CD8-positive, alpha-beta memory T cell (primary cell): ENCODE measurements at regions of chr3 and their contacts with region 1.

Region 1: DNA sequence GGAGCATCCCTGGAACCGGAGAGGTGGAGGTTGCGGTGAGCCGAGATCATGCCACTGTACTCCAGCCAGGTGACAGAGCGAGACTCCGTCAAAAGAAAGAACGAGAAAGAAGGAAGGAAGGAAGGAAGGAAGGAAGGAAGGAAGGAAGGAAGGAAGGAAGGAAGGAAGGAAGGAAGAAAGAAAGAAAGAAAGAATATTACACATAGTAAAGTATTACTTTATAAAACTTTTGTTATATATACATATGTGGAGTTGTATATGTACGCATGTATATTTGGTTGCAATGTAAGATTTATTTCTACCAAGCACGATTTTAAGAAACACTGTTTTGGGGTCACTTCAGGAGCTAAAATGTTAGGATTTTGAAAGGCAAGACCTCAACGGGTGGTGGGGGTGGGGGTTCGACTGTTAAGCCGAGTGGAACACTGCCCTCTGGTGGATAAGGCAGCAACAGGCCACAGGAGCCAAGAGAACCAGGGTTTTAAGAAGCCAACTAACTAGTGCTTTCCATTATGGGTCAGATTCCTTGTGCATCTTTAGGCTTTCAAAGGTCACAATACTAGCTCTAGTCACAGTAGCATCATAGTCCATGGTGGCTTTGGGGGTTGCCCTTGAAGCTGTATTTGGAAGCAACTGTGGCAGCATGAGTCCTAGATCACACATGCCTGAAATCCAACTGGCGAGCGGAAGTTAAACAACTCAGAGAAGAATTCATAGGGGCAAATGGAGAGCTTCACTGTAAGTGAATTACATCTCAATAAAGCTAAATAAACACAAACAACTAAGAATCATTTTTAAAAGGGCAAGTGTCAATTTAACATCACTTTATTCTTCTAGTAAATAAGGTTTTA is 22.5 kb downstream of the GLB1 start:
- DNase-seq: peak in 4 of 5 donors; percentile 51 to 80 (median 54)
- H3K4me3 ChIP-seq: no peak overlapping the region
- H3K4me3 Mint-ChIP-seq: no peak overlapping the region
- H3K27ac ChIP-seq: no peak overlapping the region
- H3K27ac Mint-ChIP-seq: peak overlapping the region in 3 of 8 donors; percentile 1 to 71 (median 52)
- H3K4me1 ChIP-seq: no peaks in the 10 kb centered on the region
- H3K4me1 Mint-ChIP-seq: peaks cover 18 to 65% (median 54%) of the 10 kb centered on the region in 3 donors
- H3K27me3 ChIP-seq: no peaks in the 10 kb centered on the region
- H3K27me3 Mint-ChIP-seq: no peaks in the 10 kb centered on the region

Region 2: GRCh38 chr3:32947789-32948238 is 126.6 kb before region 1 on chr3:
- CTCF ChIA-PET with region 1: interaction called, 125 read pairs
- POLR2A ChIA-PET with region 1: no interaction called
- DNase-seq: peak; percentile 69 to 90 (median 83)
- H3K4me3 ChIP-seq: no peak overlapping the region
- H3K4me3 Mint-ChIP-seq: peak overlapping the region in 1 of 7 donors; percentile 57
- H3K27ac ChIP-seq: no peak overlapping the region
- H3K27ac Mint-ChIP-seq: peak overlapping the region in 3 of 8 donors; percentile 23 to 38 (median 32)
- H3K4me1 ChIP-seq: peaks cover 21% of the 10 kb centered on the region
- H3K4me1 Mint-ChIP-seq: peaks cover 21 to 47% (median 46%) of the 10 kb centered on the region in 3 donors
- H3K27me3 ChIP-seq: no peaks in the 10 kb centered on the region
- H3K27me3 Mint-ChIP-seq: no peaks in the 10 kb centered on the region

Region 3: DNA sequence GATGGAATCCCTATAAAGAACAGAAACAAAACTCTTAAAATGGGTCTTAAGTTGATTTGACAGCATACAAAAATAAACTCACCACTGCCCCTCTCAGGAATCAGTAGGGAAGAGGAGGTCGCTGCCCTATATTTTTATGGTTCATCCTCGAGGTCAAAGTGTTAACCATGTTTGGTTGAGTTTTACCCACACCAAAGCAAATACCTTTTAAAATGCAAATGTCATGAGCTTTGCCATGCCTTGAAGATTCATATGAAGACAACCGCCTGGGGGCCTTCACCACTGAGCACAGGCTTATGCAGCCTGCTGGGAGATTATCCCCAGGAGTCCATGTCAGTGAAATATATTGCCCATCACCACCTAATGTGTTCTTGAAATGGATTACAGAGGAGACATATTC is 43.6 kb before region 1 on chr3:
- CTCF ChIA-PET with region 1: interaction called, 25 read pairs
- POLR2A ChIA-PET with region 1: no interaction called
- DNase-seq: peak in 2 of 5 donors; percentile 59 to 71
- H3K4me3 ChIP-seq: no peak overlapping the region
- H3K4me3 Mint-ChIP-seq: peak overlapping the region in 6 of 7 donors; percentile 1 to 59 (median 32)
- H3K27ac ChIP-seq: no peak overlapping the region
- H3K27ac Mint-ChIP-seq: peak overlapping the region in 7 of 8 donors; percentile 23 to 81 (median 48)
- H3K4me1 ChIP-seq: no peaks in the 10 kb centered on the region
- H3K4me1 Mint-ChIP-seq: peaks cover 25 to 40% (median 38%) of the 10 kb centered on the region in 3 donors
- H3K27me3 ChIP-seq: no peaks in the 10 kb centered on the region
- H3K27me3 Mint-ChIP-seq: no peaks in the 10 kb centered on the region

Region 4: GRCh38 chr3:33047842-33048834 is 26.3 kb before region 1 on chr3:
- CTCF ChIA-PET with region 1: interaction called, 33 read pairs
- POLR2A ChIA-PET with region 1: interaction called, 6 read pairs
- DNase-seq: peak; percentile 31 to 84 (median 80)
- H3K4me3 ChIP-seq: peak overlapping the region; percentile 19
- H3K4me3 Mint-ChIP-seq: peak overlapping the region; percentile 62 to 87 (median 82)
- H3K27ac ChIP-seq: no peak overlapping the region
- H3K27ac Mint-ChIP-seq: peak overlapping the region; percentile 86 to 98 (median 96)
- H3K4me1 ChIP-seq: peaks cover 73% of the 10 kb centered on the region
- H3K4me1 Mint-ChIP-seq: peaks cover 68 to 91% (median 88%) of the 10 kb centered on the region in 3 donors
- H3K27me3 ChIP-seq: no peaks in the 10 kb centered on the region
- H3K27me3 Mint-ChIP-seq: no peaks in the 10 kb centered on the region

Region 5: DNA sequence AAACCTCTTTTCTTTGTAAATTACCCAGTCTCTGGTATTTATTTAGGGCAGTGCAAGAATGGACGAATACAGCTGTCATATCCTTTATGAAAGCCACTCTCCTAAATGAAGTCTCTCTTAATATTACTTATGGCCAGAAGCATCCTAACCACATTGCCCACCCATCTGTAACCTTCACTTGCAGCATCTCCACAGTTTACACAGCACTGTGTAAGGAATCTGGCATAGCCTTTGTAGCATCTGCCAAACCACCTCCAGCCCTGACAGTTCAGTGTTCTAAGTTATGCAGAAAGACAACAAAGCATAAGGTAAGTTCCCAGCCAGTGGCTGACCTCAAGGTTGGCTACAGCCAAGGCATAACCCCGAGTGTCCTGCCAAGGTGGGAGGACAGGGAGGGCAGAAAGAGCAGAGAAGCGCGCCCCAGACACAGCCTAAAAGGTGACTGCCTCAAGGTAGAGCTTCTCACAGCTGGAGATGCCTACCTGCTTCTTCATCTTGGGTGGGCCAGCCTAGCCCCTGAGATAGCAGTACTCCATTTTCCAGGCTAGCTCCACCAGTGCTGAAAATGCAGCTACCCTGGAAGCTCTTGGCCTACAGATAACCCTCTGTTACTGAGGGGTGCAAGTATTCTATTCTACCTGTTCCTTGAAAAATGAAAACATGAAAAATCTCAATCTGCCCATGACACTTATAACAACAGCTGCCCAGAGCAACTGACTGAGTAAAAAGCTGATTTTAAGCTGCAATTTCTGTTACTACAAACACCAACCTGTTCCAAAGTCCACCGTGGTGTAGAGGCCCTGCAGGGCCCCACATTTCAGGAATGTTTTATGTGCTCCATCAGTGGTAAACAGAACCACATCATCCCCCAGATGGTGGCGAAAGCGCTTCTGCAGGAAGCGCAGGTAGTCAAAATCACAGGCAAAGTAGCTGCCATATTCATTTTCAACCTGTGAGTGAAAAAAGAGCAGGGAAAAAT is 16.8 kb before region 1 on chr3:
- CTCF ChIA-PET with region 1: interaction called, 21 read pairs
- POLR2A ChIA-PET with region 1: interaction called, 3 read pairs
- DNase-seq: no peak
- H3K4me3 ChIP-seq: no peak overlapping the region
- H3K4me3 Mint-ChIP-seq: peak overlapping the region in 4 of 7 donors; percentile 1 to 49 (median 30)
- H3K27ac ChIP-seq: no peak overlapping the region
- H3K27ac Mint-ChIP-seq: peak overlapping the region in 7 of 8 donors; percentile 1 to 92 (median 47)
- H3K4me1 ChIP-seq: peaks cover 67% of the 10 kb centered on the region
- H3K4me1 Mint-ChIP-seq: peaks cover 62 to 93% (median 90%) of the 10 kb centered on the region in 3 donors
- H3K27me3 ChIP-seq: no peaks in the 10 kb centered on the region
- H3K27me3 Mint-ChIP-seq: no peaks in the 10 kb centered on the region

Region 6: DNA sequence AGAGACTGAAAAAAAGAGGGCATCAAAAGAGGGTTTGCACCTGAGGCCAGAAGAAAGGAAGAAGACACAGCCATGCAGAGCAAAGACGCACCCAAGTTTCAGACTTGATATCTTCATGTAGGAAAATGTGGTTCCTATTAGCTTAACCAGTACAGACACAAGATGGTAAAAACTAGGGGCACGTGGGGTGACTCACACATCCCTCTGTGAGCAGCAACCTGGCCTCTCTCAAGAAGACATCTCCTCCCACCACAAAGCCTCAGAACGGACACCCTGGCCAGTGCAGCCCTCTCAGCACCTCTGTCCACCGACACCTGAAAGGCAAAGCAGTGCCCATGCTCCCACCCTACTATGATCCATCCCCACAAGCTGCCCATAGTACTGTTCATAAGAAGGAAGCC is 10.8 kb before region 1 on chr3:
- CTCF ChIA-PET with region 1: interaction called, 21 read pairs
- POLR2A ChIA-PET with region 1: interaction called, 3 read pairs
- DNase-seq: peak in 4 of 5 donors; percentile 14 to 68 (median 35)
- H3K4me3 ChIP-seq: no peak overlapping the region
- H3K4me3 Mint-ChIP-seq: peak overlapping the region; percentile 35 to 61 (median 45)
- H3K27ac ChIP-seq: no peak overlapping the region
- H3K27ac Mint-ChIP-seq: peak overlapping the region; percentile 68 to 94 (median 91)
- H3K4me1 ChIP-seq: peaks cover 56% of the 10 kb centered on the region
- H3K4me1 Mint-ChIP-seq: peaks cover 40 to 76% (median 73%) of the 10 kb centered on the region in 3 donors
- H3K27me3 ChIP-seq: no peaks in the 10 kb centered on the region
- H3K27me3 Mint-ChIP-seq: no peaks in the 10 kb centered on the region

Region 7: GRCh38 chr3:33113772-33114621 is 39.6 kb after region 1 on chr3 and contains the start of gene CRTAP:
- CTCF ChIA-PET with region 1: interaction called, 15 read pairs
- POLR2A ChIA-PET with region 1: no interaction called
- DNase-seq: peak; percentile 78 to 93 (median 83)
- H3K4me3 ChIP-seq: peak within 1 kb of the TSS; percentile 85
- H3K4me3 Mint-ChIP-seq: peak within 1 kb of the TSS; percentile 86 to 95 (median 87)
- H3K27ac ChIP-seq: peak within 1 kb of the TSS; percentile 82
- H3K27ac Mint-ChIP-seq: peak within 1 kb of the TSS; percentile 73 to 90 (median 84)
- H3K4me1 ChIP-seq: peaks cover 19% of the 10 kb centered on the region
- H3K4me1 Mint-ChIP-seq: peaks cover 47 to 74% (median 58%) of the 10 kb centered on the region in 3 donors
- H3K27me3 ChIP-seq: no peaks in the 10 kb centered on the region
- H3K27me3 Mint-ChIP-seq: peaks cover 0 to 3% of the 10 kb centered on the region in 2 donors
- total RNA-seq, gene CRTAP: 49.5 to 50.3 TPM